CD4-positive, alpha-beta memory T cell (primary cell): ENCODE measurements at regions of chr10 and their contacts with region 1.

Region 1: DNA sequence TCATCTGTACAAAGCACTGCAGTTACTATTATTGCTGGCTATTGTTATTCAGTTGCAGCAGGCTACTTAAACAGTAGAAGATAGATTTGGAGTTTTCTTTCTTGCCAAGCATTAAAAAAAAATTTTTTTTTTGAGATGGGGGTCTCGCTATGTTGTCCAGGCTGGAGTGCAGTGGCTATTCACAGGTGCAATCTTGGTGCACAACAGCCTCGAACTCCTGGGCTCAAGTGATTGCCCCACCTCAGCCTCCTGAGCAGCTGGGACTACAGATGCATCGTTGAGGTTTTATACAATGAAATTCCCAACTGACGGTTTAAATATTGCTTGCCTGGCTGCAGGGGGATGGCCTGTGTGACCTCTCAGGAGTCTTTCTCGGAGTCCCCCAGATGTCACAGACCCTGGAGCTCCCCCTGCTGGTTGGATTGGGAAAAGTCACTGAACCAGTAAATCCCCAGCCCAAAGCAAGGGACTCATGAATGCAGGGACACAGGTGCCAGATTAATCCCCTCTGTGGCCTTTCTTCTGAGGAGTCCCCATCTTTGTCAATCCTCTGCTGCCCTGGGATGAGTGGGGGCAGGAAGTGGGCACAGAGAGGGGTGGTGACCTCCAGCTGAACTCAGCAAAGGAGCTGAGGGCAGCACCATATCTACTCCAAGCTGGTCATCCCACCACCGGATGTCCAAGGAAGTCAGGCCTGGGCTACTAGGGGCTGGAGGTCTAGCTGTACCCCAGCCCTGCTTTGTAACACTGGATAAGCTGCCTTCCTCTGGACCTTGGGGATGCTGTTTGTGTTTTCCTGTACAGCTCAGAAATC is 149.6 kb downstream of the C10orf105 start:
- DNase-seq: peak; percentile 54 to 68 (median 63)
- H3K4me3 ChIP-seq: no peak overlapping the region
- H3K4me3 Mint-ChIP-seq: no peak overlapping the region
- H3K27ac ChIP-seq: no peak overlapping the region
- H3K27ac Mint-ChIP-seq: no peak overlapping the region
- H3K4me1 ChIP-seq: no peaks in the 10 kb centered on the region
- H3K4me1 Mint-ChIP-seq: no peaks in the 10 kb centered on the region
- H3K27me3 ChIP-seq: no peaks in the 10 kb centered on the region
- H3K27me3 Mint-ChIP-seq: peaks cover 0 to under 1% of the 10 kb centered on the region in 2 donors

Region 2: DNA sequence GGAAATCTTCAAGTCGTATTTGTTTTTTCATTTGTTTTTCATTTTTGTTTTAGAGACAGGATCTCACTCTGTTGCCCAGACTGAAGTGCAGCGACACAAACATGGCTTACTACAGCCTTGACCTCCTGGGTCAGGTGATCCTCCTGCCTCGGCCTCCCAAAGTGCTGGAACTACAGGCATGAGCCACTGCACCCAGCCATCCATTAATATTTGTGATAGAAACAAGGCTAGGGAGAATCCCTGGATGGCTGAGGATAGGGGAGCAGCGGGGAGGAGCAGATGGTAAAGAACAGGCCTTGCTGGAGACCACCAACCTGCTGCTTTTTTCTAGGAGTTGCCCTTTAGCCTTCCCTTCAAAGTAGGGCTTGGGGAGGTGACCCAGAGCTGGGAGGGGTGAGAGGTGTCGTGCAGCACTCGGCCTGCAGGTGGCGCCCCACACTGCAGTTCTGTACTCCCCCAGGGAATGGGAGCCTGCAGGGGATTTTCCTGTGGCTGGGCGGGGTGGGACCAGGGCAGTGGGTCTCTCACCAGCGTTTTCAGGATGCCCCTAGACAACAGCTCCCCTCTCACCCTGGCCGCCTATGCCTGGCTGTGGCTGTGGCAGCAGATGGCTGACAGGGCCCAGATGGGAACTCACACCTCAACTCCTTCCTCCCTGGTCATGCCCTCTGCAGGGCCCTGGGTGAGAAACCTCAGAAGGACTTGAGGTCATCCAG is 185.9 kb before region 1 on chr10:
- CTCF ChIA-PET with region 1: interaction called, 23 read pairs
- POLR2A ChIA-PET with region 1: no interaction called
- intact Hi-C with region 1: loop called (anchors 2 kb)
- DNase-seq: peak; percentile 56 to 67 (median 60)
- H3K4me3 ChIP-seq: no peak overlapping the region
- H3K4me3 Mint-ChIP-seq: no peak overlapping the region
- H3K27ac ChIP-seq: no peak overlapping the region
- H3K27ac Mint-ChIP-seq: no peak overlapping the region
- H3K4me1 ChIP-seq: no peaks in the 10 kb centered on the region
- H3K4me1 Mint-ChIP-seq: peaks cover 0 to 3% (median 0%) of the 10 kb centered on the region in 4 donors
- H3K27me3 ChIP-seq: no peaks in the 10 kb centered on the region
- H3K27me3 Mint-ChIP-seq: peaks cover 2 to 3% of the 10 kb centered on the region in 2 donors

Region 3: DNA sequence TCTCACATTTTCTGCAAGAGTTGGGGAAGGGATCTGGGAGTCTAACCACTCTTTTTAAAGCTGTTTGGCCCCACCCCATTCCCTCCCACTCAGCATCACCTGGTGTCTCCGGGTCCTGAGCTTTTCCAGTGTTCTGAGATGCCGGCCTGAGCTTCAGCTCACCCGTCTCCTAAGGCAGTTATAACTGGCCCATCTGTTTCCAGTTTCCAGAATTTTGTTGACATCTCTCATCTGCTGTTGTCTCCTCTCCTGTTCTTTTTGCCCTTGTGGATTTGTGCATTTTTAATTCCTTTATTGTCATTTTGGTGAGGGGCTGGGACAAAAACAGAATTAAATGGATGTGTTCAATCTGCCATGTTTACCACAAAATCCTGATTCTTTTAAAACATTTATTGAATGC is 11.0 kb before region 1 on chr10:
- CTCF ChIA-PET with region 1: interaction called, 12 read pairs
- POLR2A ChIA-PET with region 1: no interaction called
- intact Hi-C with region 1: no loop called
- DNase-seq: no peak
- H3K4me3 ChIP-seq: no peak overlapping the region
- H3K4me3 Mint-ChIP-seq: no peak overlapping the region
- H3K27ac ChIP-seq: no peak overlapping the region
- H3K27ac Mint-ChIP-seq: no peak overlapping the region
- H3K4me1 ChIP-seq: no peaks in the 10 kb centered on the region
- H3K4me1 Mint-ChIP-seq: no peaks in the 10 kb centered on the region
- H3K27me3 ChIP-seq: no peaks in the 10 kb centered on the region
- H3K27me3 Mint-ChIP-seq: peaks cover 16 to 18% of the 10 kb centered on the region in 2 donors